ENCODE measurements at regions of chr19 and their contacts with region 1.

Region 1: DNA sequence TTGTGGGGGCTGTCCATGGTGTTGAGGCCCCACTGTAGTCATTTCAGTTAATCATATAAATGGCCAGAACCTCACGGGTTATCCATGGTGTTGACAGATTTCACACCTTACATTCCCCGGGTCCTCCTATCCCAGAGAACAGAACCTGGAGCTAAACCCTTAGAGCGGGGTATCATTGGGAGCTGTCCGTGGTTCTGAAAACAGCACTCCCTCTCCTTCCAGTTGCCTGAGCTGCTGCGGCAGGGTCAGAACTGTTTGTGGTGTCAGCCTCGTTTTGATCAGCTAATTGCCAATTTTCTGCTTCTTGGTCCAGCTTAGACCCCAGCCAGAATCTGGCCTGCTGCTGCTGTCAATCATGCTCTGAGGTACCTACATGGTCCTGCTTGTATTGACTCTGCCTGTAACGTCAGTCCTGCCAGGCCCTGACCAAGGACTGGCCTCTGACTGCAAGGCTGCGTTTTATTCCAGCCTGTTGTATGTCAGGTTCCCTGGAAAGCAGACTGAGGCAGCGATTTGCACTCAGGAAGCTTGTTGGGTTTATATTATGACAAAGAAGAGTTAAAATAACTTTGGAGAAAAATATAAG is 55.8 kb upstream of the KCTD15 start:
- DNase-seq: peak; percentile 20
- H3K4me3 ChIP-seq: no peak overlapping the region
- CTCF ChIP-seq: no peak

Region 2: GRCh38 chr19:33778089-33778791 is 37.3 kb after region 1 on chr19:
- in situ Hi-C with region 1: no loop called
- DNase-seq: no peak
- H3K4me3 ChIP-seq: no peak overlapping the region
- CTCF ChIP-seq: peak; percentile 100

Region 3: GRCh38 chr19:33868788-33869412 is 128.0 kb after region 1 on chr19:
- in situ Hi-C with region 1: loop called (anchors 10 kb)
- DNase-seq: no peak
- H3K4me3 ChIP-seq: no peak overlapping the region
- CTCF ChIP-seq: peak; percentile 4

Measured in astrocyte of the cerebellum (primary cell).